Naive thymus-derived CD4-positive, alpha-beta T cell (primary cell): ENCODE measurements at regions of chr6 and their contacts with region 1.

Region 1: DNA sequence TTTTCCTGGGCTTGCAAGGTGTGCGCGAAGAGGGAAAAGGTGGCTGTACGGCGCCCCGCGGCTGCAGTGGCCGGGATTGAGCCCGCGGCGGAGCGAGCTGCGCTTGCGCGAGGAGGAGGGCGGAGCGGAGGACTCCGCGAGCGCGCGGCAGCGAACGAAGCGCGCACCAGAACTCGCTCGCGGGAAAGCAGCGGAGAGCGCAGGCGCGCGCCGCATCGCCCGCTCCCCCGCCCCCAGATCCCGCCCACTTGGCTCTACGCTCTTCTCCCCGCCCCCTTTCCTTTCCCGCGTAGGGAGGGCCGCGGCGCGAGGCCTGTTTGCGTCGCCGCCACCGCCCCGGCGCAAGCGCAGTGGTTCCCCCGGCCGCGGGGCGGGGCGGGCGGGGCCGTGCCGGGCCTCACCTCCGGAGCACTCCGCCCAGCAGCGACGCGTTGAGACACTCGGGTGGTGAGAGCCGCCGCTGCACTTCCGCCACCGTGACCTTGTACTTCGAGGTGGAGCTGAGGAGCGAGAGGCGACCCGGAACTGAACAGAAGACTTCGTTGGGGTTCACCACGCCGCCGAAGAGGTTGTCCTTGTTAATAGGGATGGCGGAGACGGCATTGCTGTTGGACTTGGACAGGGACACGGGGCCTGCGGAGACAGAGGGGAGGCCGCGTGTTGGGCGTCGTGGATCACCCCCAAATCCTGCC is 10.6 kb downstream of the TFAP2A start:
- DNase-seq: peak; percentile 77 to 90 (median 83)
- ATAC-seq: peak; percentile 93
- H3K4me3 ChIP-seq: peak overlapping the region; percentile 77
- H3K4me3 Mint-ChIP-seq: peak overlapping the region; percentile 79 to 91 (median 84)
- H3K27ac ChIP-seq: peak overlapping the region; percentile 9
- H3K27ac Mint-ChIP-seq: peak overlapping the region in 8 of 9 donors; percentile 41 to 90 (median 72)
- H3K4me1 ChIP-seq: peaks cover 10 to 12% of the 10 kb centered on the region in 2 donors
- H3K4me1 Mint-ChIP-seq: peaks cover 6 to 20% (median 14%) of the 10 kb centered on the region in 7 donors
- H3K27me3 ChIP-seq: peaks cover 0 to 9% of the 10 kb centered on the region in 2 donors
- H3K27me3 Mint-ChIP-seq: peaks cover 48 to 90% (median 66%) of the 10 kb centered on the region in 5 donors

Region 2: DNA sequence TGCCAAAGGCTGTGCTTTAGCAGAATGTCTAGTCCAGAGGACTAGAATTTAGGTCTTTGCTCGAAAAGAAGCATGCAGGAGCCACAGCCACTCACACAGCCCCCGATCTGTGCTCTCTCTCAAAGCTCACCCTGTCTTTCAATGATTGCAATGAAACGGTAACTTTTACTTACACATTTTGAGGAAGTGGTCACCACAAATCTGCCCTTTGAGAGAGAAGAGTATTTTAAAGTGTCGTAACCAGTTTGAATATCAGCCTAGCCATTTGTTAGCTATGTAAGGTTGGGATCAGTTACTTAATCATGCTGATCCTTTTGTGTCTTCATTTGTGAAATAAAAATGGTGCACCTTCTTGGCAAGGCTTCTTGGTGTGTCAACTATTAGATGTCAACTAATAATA is 198.4 kb before region 1 on chr6:
- CTCF ChIA-PET with region 1: no interaction called
- POLR2A ChIA-PET with region 1: no interaction called
- intact Hi-C with region 1: no loop called
- DNase-seq: no peak
- ATAC-seq: no peak
- H3K4me3 ChIP-seq: no peak overlapping the region
- H3K4me3 Mint-ChIP-seq: no peak overlapping the region
- H3K27ac ChIP-seq: no peak overlapping the region
- H3K27ac Mint-ChIP-seq: no peak overlapping the region
- H3K4me1 ChIP-seq: no peaks in the 10 kb centered on the region
- H3K4me1 Mint-ChIP-seq: no peaks in the 10 kb centered on the region
- H3K27me3 ChIP-seq: no peaks in the 10 kb centered on the region
- H3K27me3 Mint-ChIP-seq: peaks cover 0 to 25% (median 13%) of the 10 kb centered on the region in 5 donors

Region 3: DNA sequence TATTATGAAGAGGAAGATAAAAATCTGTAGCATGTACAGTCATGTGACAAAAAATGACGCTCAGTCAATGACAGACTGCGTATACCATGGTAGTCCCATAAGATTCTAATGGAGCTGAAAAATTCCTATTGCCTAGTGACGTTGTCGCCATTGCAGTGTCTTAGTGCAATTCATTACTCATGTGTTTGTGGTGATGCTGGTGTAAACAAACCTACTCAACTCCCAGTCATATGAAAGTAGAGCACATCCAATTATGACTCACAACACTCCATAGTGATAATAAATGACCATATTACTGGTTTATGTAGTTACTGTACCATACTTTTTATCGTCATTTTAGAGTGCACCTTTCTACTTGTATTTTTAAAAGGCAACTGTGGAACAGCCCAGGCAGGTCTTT is 34.4 kb before region 1 on chr6:
- CTCF ChIA-PET with region 1: no interaction called
- POLR2A ChIA-PET with region 1: no interaction called
- intact Hi-C with region 1: no loop called
- DNase-seq: no peak
- ATAC-seq: no peak
- H3K4me3 ChIP-seq: no peak overlapping the region
- H3K4me3 Mint-ChIP-seq: no peak overlapping the region
- H3K27ac ChIP-seq: no peak overlapping the region
- H3K27ac Mint-ChIP-seq: no peak overlapping the region
- H3K4me1 ChIP-seq: no peaks in the 10 kb centered on the region
- H3K4me1 Mint-ChIP-seq: no peaks in the 10 kb centered on the region
- H3K27me3 ChIP-seq: no peaks in the 10 kb centered on the region
- H3K27me3 Mint-ChIP-seq: peaks cover 0 to 28% (median 14%) of the 10 kb centered on the region in 5 donors

Region 4: DNA sequence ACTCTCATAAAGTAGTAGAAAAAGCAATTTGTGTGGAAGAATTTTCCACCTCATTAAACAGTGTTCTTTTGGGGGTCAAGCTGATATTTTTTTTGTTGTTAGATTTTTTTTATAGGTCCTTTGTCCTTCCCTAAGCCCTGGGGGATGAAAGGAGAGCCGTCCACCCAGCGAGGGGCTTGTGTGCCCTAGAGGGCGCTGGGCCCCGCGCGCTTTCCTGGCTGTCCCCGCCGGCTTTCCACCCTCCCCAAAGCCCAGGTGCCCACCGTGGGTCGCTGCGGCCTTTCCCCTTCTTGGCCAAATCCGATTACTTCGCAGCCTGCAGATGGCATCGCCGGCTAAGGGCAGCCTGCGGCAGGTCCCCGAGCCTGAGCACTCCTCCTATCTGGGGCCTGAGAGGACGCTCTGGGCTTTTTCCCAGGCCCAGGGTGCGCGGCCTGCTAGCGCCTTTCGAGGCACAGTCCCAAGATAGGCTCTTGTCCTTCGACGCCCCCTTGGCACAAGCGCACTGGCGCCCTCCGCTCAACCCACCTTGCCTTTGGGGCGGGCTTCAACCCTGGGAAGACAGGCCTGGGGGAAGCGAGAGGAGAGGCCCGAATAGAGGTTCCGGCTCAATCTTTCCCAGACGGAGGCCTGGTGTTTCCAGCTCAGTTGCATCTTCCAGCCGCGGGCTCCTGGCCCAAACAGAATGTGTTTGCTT is 23.0 kb before region 1 on chr6:
- CTCF ChIA-PET with region 1: no interaction called
- POLR2A ChIA-PET with region 1: no interaction called
- intact Hi-C with region 1: no loop called
- DNase-seq: no peak
- ATAC-seq: no peak
- H3K4me3 ChIP-seq: no peak overlapping the region
- H3K4me3 Mint-ChIP-seq: peak overlapping the region in 2 of 10 donors; percentile 10 to 25
- H3K27ac ChIP-seq: no peak overlapping the region
- H3K27ac Mint-ChIP-seq: no peak overlapping the region
- H3K4me1 ChIP-seq: no peaks in the 10 kb centered on the region
- H3K4me1 Mint-ChIP-seq: peaks cover 4 to 29% (median 16%) of the 10 kb centered on the region in 7 donors
- H3K27me3 ChIP-seq: peaks cover 3 to 20% of the 10 kb centered on the region in 2 donors
- H3K27me3 Mint-ChIP-seq: peaks cover 67 to 78% (median 73%) of the 10 kb centered on the region in 5 donors

Region 5: DNA sequence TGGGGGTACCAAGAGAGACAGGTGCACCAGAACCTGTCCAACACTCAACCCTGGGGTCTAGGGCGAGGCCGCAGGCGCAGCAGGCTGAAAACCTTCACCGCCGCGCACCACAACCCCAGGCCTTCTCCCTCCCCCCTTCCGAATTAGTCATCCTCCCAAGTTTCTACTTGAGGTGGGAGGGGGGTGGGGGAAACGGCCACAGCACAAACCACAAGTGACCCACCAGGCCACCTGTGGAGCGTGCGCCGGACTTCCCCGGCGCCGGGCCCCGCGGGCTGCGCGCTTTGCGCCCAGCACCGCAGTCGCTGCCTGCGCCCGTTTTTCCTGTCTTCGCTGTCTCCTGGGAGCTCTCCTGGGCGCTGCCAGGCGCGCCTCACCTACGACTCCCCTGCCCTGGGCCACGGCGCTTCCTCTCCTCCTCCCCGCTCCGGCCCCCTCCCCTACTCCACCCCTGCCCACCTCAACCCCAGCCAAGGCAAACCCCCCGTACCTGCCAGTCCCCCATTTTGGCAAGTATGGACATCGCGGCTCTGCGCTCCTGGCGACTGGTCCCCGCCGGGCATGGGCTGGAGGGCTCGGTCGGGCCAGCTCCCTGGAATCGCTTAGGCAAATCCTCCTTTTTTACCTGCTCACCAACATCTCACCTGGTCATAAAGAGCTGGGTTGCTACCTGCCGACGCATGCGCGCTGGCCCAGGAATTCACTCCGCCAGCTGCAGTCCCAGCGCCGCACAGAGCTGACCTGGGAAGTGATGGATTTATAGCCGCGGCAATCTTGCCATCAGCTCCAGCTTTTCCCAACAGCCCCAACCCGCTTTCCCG is 14.9 kb after region 1 on chr6:
- CTCF ChIA-PET with region 1: no interaction called
- POLR2A ChIA-PET with region 1: no interaction called
- intact Hi-C with region 1: loop called in 1 of 2 experiments (anchors 2 kb)
- DNase-seq: no peak
- ATAC-seq: no peak
- H3K4me3 ChIP-seq: no peak overlapping the region
- H3K4me3 Mint-ChIP-seq: no peak overlapping the region
- H3K27ac ChIP-seq: no peak overlapping the region
- H3K27ac Mint-ChIP-seq: peak overlapping the region in 2 of 9 donors; percentile 43 to 63
- H3K4me1 ChIP-seq: peaks cover 0 to 17% of the 10 kb centered on the region in 2 donors
- H3K4me1 Mint-ChIP-seq: peaks cover 19 to 38% (median 26%) of the 10 kb centered on the region in 7 donors
- H3K27me3 ChIP-seq: peaks cover 27 to 52% of the 10 kb centered on the region in 2 donors
- H3K27me3 Mint-ChIP-seq: peaks cover 77 to 98% (median 93%) of the 10 kb centered on the region in 5 donors

Region 6: GRCh38 chr6:10722820-10723566 is 318.7 kb after region 1 on chr6 and contains the start of gene TMEM14C:
- CTCF ChIA-PET with region 1: no interaction called
- POLR2A ChIA-PET with region 1: no interaction called
- intact Hi-C with region 1: loop called (anchors 1 to 10 kb)
- DNase-seq: peak; percentile 48 to 93 (median 61)
- ATAC-seq: peak; percentile 86
- H3K4me3 ChIP-seq: peak within 1 kb of the TSS; percentile 82
- H3K4me3 Mint-ChIP-seq: peak within 1 kb of the TSS; percentile 91 to 98 (median 96)
- H3K27ac ChIP-seq: peak within 1 kb of the TSS; percentile 76
- H3K27ac Mint-ChIP-seq: peak within 1 kb of the TSS; percentile 89 to 97 (median 94)
- H3K4me1 ChIP-seq: peaks cover 14 to 15% of the 10 kb centered on the region in 2 donors
- H3K4me1 Mint-ChIP-seq: peaks cover 27 to 62% (median 53%) of the 10 kb centered on the region in 7 donors
- H3K27me3 ChIP-seq: no peaks in the 10 kb centered on the region
- H3K27me3 Mint-ChIP-seq: no peaks in the 10 kb centered on the region
- total RNA-seq, gene TMEM14C: 20.2 to 64.3 (median 25.0) TPM

Region 7: GRCh38 chr6:10837995-10838793 is 433.9 kb after region 1 on chr6 and contains the start of gene MAK:
- CTCF ChIA-PET with region 1: no interaction called
- POLR2A ChIA-PET with region 1: no interaction called
- intact Hi-C with region 1: loop called in 1 of 2 experiments (anchors 1 kb)
- DNase-seq: peak; percentile 80 to 93 (median 86)
- ATAC-seq: peak; percentile 98
- H3K4me3 ChIP-seq: peak within 1 kb of the TSS; percentile 59
- H3K4me3 Mint-ChIP-seq: peak within 1 kb of the TSS; percentile 71 to 89 (median 78)
- H3K27ac ChIP-seq: no peak within 1 kb of the TSS
- H3K27ac Mint-ChIP-seq: peak within 1 kb of the TSS in 4 of 9 donors; percentile 21 to 87 (median 55)
- H3K4me1 ChIP-seq: peaks cover 14 to 20% of the 10 kb centered on the region in 2 donors
- H3K4me1 Mint-ChIP-seq: peaks cover 10 to 22% (median 19%) of the 10 kb centered on the region in 7 donors
- H3K27me3 ChIP-seq: peaks cover 23 to 29% of the 10 kb centered on the region in 2 donors
- H3K27me3 Mint-ChIP-seq: peaks cover 52 to 65% (median 61%) of the 10 kb centered on the region in 5 donors
- total RNA-seq, gene MAK: 0.34 to 0.42 TPM in 2 of 5 experiments, not detected in the others

Region 8: DNA sequence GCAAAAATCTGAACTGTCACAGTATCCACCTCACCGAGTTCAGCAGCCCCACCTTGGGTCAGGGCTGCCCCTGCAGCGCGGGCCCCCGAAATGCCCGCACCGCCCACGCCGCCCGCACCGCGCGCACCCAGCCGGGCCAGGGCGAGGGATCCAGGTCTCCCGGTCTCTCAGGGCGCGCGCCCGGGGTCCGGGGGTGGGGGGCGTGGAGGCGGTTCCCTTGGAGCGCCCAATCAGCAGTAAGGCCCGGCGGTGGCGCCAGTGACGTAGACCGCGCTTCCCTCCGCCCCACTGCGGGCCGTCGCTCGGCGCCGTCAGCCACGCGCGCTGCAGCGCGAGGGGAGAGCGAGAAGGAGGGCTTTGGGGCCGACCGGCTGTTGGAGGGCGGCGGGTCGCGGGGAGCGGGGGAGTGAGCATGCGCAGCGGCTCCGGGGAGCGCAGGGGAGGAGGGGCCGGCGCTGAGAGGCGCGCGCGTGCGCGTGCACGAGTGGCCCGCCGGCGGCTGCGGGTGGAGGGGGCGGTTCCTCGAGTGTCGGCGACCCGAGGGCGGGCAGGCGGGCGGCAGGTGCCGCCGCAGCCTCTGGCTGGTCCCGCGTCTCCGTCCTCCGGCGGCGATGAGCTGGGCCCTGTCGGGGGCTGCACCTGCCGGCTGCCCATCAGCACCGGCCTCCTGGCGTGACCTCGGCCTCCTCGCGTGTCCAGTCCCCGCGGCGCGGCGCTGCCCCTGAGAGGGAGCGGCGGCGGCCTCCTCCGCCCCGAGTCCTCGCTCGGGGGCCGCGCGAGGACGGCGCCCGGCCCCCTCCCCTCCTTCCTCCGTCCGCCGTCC is 1133.2 kb after region 1 on chr6 and contains the start of gene TMEM170B:
- CTCF ChIA-PET with region 1: no interaction called
- POLR2A ChIA-PET with region 1: no interaction called
- intact Hi-C with region 1: loop called in 1 of 2 experiments (anchors 2 kb)
- DNase-seq: peak; percentile 94 to 99 (median 98)
- ATAC-seq: peak; percentile 95
- H3K4me3 ChIP-seq: peak within 1 kb of the TSS; percentile 62
- H3K4me3 Mint-ChIP-seq: peak within 1 kb of the TSS; percentile 82 to 90 (median 88)
- H3K27ac ChIP-seq: peak within 1 kb of the TSS; percentile 76
- H3K27ac Mint-ChIP-seq: peak within 1 kb of the TSS in 8 of 9 donors; percentile 67 to 93 (median 83)
- H3K4me1 ChIP-seq: peaks cover 4 to 5% of the 10 kb centered on the region in 2 donors
- H3K4me1 Mint-ChIP-seq: peaks cover 6 to 28% (median 19%) of the 10 kb centered on the region in 7 donors
- H3K27me3 ChIP-seq: no peaks in the 10 kb centered on the region
- H3K27me3 Mint-ChIP-seq: peaks cover 0 to 76% (median 7%) of the 10 kb centered on the region in 5 donors
- total RNA-seq, gene TMEM170B: 0.29 to 12.7 (median 3.4) TPM